ENCODE measurements at regions of chr11 and their contacts with region 1.

Region 1: DNA sequence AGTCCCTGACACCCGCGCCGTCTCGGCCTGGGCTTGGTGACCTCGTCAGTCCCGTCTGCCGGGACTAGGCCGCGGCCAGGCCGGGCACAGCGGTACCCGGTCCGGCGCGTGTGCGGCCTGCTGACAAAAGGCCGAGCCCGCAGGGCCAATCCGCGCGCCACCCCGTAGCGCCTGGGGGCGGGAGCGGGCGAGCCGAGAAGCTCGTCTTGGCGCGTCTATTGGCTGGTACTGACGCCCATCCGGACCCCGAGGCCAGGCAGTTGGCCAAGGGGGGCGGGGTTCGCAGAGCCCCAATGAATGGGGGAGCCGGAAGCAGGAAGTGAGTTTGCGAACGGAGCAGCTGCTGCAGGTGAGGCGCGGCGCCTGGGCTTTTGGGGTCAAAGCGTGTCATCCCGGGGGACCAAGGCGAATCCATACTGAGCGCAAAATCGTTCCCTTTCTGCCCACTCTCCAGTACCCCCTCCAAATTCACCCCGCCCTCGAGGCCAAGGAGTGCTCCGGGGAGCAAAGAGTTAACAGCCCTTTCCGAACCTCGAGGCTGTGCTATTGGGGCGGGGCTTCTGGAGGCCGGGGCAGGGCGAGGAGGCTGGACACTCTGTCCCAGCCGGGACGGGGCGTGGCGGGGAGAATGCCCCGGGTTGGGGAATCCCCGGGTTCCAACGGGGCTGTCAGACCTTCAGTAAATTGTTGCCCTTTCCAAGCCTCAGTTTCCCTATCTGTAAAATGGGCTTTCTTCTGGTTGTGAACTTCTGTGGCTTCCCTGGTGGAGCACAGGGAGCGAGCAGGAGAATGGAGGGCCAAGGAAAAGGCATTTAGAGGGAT is at the start of gene DPP3:
- DNase-seq: peak; percentile 91
- ATAC-seq: peak; percentile 90
- H3K4me3 ChIP-seq: peak within 1 kb of the TSS; percentile 86 to 88
- H3K27ac ChIP-seq: peak within 1 kb of the TSS; percentile 79
- H3K4me1 ChIP-seq: peaks cover 8 to 17% of the 10 kb centered on the region in 2 experiments; a peak in 1 of 4 replicates
- H3K27me3 ChIP-seq: no peaks in the 10 kb centered on the region
- CTCF ChIP-seq: no peak
- POLR2A ChIP-seq: peak; percentile 66
- RAD21 ChIP-seq: no peak
- total RNA-seq, gene DPP3: 55.6 TPM

Region 2: GRCh38 chr11:66408488-66409214 is 71.7 kb before region 1 on chr11:
- CTCF ChIA-PET with region 1: interaction called, 7 read pairs
- POLR2A ChIA-PET with region 1: no interaction called
- RAD21 ChIA-PET with region 1: no interaction called
- intact Hi-C with region 1: loop called (anchors 1 kb)
- DNase-seq: peak; percentile 62
- ATAC-seq: peak; percentile 92
- H3K4me3 ChIP-seq: peak overlapping the region; percentile 26 to 45; a peak in 3 of 4 replicates
- H3K27ac ChIP-seq: no peak overlapping the region
- H3K4me1 ChIP-seq: peaks cover 0 to 3% of the 10 kb centered on the region in 2 experiments; a peak in 1 of 4 replicates
- H3K27me3 ChIP-seq: peaks cover 16% of the 10 kb centered on the region; the same call in 1 of the 2 replicates
- CTCF ChIP-seq: peak; percentile 99 to 100 (median 100)
- POLR2A ChIP-seq: no peak
- RAD21 ChIP-seq: peak; percentile 99

Region 3: DNA sequence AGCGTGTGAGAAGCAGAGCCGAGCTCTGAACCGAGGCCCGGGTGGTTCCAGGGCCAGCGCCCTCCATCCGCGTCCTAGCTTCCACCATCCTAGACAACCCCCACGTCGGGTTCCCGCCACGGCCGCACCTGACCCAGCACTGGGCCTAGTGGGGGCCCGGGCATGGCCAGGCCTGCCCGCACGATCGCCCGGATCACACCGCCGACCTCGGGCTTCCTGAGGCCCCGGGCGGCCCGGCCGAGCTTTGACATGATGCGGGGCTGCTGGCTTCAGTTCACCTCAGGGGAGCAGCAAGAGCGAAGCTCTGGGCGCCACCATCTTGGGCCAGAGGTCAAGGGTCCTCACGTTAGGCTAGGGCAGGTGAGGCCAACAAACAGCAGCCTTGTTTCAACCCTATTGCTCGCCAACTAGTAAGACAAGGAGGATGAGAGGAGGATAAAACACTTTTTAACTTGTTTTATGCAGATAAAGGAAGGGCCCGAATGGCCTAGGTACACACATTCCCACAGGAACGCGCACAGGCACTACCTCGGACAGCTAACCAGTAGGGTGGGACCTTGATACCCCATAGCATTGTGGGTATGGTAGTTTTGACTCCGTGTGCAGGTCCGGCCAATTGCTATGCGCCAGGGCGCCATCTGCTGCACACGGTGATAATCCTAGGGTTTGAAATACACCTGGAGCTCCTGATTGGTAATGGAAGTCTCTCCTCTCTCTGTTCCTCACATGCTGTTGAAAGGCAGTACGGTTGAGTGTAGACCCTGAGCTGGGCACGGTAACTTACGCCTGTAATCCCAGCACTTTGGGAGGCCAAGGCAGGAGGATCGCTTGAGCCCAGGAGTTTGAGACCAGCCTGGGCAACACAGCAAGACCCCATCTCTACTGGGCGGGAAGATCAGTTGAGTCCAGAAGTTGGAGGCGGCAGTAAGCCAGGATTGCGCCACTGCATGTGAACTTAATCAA is 41.5 kb before region 1 on chr11 and contains the start of gene MRPL11:
- CTCF ChIA-PET with region 1: interaction called, 8 read pairs
- POLR2A ChIA-PET with region 1: interaction called, 13 read pairs
- RAD21 ChIA-PET with region 1: interaction called in 1 of 2 experiments, 5 read pairs
- intact Hi-C with region 1: no loop called
- DNase-seq: peak; percentile 91
- ATAC-seq: peak; percentile 93
- H3K4me3 ChIP-seq: peak within 1 kb of the TSS; percentile 68 to 96
- H3K27ac ChIP-seq: peak within 1 kb of the TSS; percentile 85
- H3K4me1 ChIP-seq: peaks cover 4 to 23% of the 10 kb centered on the region in 2 experiments; a peak in 3 of 4 replicates
- H3K27me3 ChIP-seq: no peaks in the 10 kb centered on the region
- CTCF ChIP-seq: peak; percentile 54 to 60 (median 60); a peak in 5 of 6 replicates
- POLR2A ChIP-seq: peak; percentile 30
- RAD21 ChIP-seq: peak; percentile 49
- total RNA-seq, gene MRPL11: 126 TPM

Region 4: DNA sequence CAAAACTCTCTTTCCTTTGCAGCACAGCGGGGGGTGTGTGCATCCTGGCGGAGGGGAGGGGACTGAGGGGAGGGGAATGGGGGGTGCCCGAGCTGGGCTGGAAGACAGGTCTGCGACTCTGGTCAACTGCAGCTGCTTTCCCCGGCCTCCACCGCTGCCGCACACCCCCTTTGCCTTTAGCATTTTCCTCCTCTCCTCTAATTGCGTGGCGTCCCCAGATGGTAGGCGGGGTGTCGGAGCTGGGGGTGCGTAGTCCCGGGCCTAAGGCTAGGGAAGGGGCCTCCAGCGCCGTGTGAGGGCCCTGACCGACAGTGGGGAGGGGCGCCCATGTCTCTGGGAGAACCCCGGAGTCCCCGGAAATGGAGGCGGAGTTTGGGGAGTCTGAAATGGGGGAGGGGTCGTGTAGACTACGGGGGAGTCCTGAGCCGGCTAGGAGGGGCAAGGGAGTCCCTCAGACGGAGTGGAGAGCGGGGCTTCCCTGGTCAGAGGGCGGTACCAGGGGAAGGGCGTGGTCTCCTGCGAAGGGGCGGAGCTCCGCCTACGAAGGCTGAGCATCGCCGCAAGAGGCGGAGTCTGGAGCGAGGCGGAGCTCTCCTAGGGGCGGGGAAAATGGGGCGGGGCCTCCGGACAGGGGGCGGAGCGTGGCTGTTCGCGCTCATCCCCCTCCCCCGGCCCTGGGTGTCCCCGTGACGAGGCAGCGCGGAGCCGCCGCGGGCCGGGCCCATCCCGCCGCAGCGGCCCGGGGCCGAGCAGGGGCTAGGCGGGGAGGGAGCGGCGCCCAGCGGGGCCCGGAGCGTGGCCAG is 13.9 kb before region 1 on chr11 and contains the start of gene PELI3:
- CTCF ChIA-PET with region 1: interaction called, 13 read pairs
- POLR2A ChIA-PET with region 1: interaction called, 17 read pairs
- RAD21 ChIA-PET with region 1: no interaction called
- intact Hi-C with region 1: loop called (anchors 1 kb)
- DNase-seq: peak; percentile 74
- ATAC-seq: peak; percentile 91
- H3K4me3 ChIP-seq: peak within 1 kb of the TSS; percentile 71 to 95
- H3K27ac ChIP-seq: peak within 1 kb of the TSS; percentile 70
- H3K4me1 ChIP-seq: peaks cover 8 to 19% of the 10 kb centered on the region in 2 experiments
- H3K27me3 ChIP-seq: no peaks in the 10 kb centered on the region
- CTCF ChIP-seq: no peak
- POLR2A ChIP-seq: no peak
- RAD21 ChIP-seq: no peak
- total RNA-seq, gene PELI3: 12.8 TPM

Region 5: DNA sequence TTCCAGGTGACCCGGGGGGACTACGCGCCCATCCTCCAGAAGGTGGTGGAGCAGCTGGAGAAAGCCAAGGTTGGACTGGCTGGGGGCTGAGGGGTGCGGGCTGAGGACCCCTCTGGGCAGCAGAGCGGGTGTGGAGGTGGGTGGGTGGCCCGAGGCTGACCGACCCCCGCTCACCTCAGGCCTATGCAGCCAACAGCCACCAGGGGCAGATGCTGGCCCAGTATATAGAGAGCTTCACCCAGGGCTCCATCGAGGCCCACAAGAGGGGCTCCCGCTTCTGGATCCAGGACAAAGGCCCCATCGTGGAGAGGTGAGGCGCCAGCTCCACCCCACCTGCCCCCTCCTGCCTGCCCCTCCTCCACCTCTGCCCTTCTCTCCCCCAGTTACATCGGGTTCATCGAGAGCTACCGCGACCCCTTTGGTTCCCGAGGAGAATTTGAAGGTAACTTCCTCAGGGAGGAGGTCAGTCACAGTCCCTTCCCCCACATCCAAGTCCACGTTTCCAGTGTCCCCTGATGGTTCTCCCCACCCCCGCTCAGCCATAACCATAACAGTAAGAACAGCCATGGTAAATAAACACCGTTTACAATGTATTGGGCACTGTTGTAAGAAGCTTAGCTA is 11.1 kb after region 1 on chr11:
- CTCF ChIA-PET with region 1: interaction called, 16 read pairs
- POLR2A ChIA-PET with region 1: no interaction called
- RAD21 ChIA-PET with region 1: no interaction called
- intact Hi-C with region 1: no loop called
- DNase-seq: no peak
- ATAC-seq: peak; percentile 84
- H3K4me3 ChIP-seq: no peak overlapping the region
- H3K27ac ChIP-seq: no peak overlapping the region
- H3K4me1 ChIP-seq: no peaks in the 10 kb centered on the region
- H3K27me3 ChIP-seq: no peaks in the 10 kb centered on the region
- CTCF ChIP-seq: peak in 2 of 3 experiments; percentile 58 to 61; a peak in 4 of 6 replicates
- POLR2A ChIP-seq: no peak
- RAD21 ChIP-seq: no peak